Natural killer cell (primary cell): ENCODE measurements at regions of chr7 and their contacts with region 1.

Region 1: GRCh38 chr7:64951250-64951848 is 39.5 kb downstream of the ZNF117 start:
- DNase-seq: peak in 1 of 2 donors; percentile 67
- ATAC-seq: peak; percentile 66 to 69 (median 68)
- H3K4me3 ChIP-seq: no peak overlapping the region
- H3K4me3 Mint-ChIP-seq: no peak overlapping the region
- H3K27ac ChIP-seq: no peak overlapping the region
- H3K27ac Mint-ChIP-seq: no peak overlapping the region
- H3K4me1 ChIP-seq: peaks cover 10% of the 10 kb centered on the region
- H3K4me1 Mint-ChIP-seq: peaks cover 5 to 7% of the 10 kb centered on the region in 2 donors
- H3K27me3 ChIP-seq: peaks cover 21% of the 10 kb centered on the region
- H3K27me3 Mint-ChIP-seq: peaks cover 27 to 54% of the 10 kb centered on the region in 2 donors
- CTCF ChIP-seq: peak; percentile 83

Region 2: GRCh38 chr7:65307651-65308299 is 356.4 kb after region 1 on chr7:
- intact Hi-C with region 1: loop called (anchors 1 kb)
- DNase-seq: peak; percentile 22 to 76
- ATAC-seq: peak; percentile 56 to 85 (median 78)
- H3K4me3 ChIP-seq: no peak overlapping the region
- H3K4me3 Mint-ChIP-seq: no peak overlapping the region
- H3K27ac ChIP-seq: no peak overlapping the region
- H3K27ac Mint-ChIP-seq: no peak overlapping the region
- H3K4me1 ChIP-seq: peaks cover 3% of the 10 kb centered on the region
- H3K4me1 Mint-ChIP-seq: no peaks in the 10 kb centered on the region
- H3K27me3 ChIP-seq: no peaks in the 10 kb centered on the region
- H3K27me3 Mint-ChIP-seq: peaks cover 3 to 21% of the 10 kb centered on the region in 2 donors
- CTCF ChIP-seq: peak; percentile 91